A673 (cell line): ENCODE measurements at regions of chr2 and their contacts with region 1.

Region 1: GRCh38 chr2:190088917-190089316 is 26.4 kb upstream of the MSTN start:
- DNase-seq: peak; percentile 76
- H3K4me3 ChIP-seq: no peak overlapping the region
- H3K27ac ChIP-seq: no peak overlapping the region
- H3K4me1 ChIP-seq: peaks cover 3% of the 10 kb centered on the region
- H3K27me3 ChIP-seq: no peaks in the 10 kb centered on the region
- CTCF ChIP-seq: peak; percentile 75

Region 2: DNA sequence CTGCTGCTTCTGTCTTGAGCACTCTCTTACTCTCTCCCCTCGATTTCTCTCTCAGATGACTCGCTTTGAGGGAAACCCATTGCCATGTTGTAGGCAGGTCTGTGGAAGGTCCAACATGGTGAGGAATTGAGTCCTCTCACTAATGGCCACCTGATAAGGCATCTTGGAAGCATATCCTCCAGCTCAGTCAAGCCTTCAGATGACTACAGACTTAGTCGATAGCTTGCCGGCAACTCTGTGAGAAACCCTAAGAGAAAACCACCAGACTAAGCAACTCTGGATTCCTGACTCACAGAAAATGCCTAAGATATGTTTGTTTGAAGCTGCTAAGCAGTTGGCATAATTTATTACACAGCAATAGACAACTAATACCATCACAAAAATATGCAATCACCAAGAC is 596.5 kb before region 1 on chr2:
- CTCF ChIA-PET with region 1: no interaction called
- POLR2A ChIA-PET with region 1: no interaction called
- intact Hi-C with region 1: no loop called
- DNase-seq: no peak
- H3K4me3 ChIP-seq: no peak overlapping the region
- H3K27ac ChIP-seq: no peak overlapping the region
- H3K4me1 ChIP-seq: no peaks in the 10 kb centered on the region
- H3K27me3 ChIP-seq: no peaks in the 10 kb centered on the region
- CTCF ChIP-seq: no peak

Region 3: DNA sequence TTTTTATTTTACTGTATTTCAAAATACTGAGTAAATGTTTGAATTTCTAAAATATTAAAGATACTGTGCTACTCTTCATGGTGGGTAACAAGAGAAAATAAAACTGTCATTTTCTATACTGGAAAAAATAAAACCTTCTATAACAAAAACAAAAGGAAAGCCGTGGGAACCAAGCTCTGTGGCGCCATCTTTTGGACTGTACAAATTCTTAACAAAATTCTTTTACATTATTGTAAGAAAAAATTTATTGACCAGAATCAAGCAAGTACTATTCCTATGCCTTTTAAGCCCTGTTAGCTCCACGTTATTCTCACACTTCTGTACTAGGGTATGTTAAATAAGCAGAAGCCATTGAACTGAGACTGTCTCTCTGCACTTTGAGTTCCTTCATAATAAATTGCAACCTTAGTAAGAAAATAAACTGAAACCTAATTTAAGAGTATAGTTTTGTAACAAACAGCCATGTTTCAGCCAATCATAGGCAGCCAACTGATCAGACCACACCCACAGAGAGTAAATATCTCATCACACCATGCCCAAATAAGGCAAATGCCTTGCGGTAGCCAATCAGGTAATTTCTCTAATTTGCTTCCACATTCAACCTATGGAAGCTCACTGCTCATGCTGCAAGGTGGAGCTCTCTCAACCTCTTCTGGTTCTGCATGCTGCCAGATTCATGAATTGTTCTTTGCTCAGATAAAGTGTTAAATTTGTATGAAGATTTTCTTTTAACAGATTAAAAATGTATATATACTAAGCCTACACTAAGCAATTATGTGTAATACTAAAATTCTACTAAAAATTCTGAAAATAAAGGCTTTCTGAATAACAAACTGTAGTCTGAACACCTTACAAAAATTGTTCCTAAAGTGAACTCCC is 188.6 kb after region 1 on chr2:
- CTCF ChIA-PET with region 1: interaction called, 3 read pairs
- POLR2A ChIA-PET with region 1: no interaction called
- intact Hi-C with region 1: loop called (anchors 2 kb)
- DNase-seq: peak; percentile 61
- H3K4me3 ChIP-seq: no peak overlapping the region
- H3K27ac ChIP-seq: no peak overlapping the region
- H3K4me1 ChIP-seq: no peaks in the 10 kb centered on the region
- H3K27me3 ChIP-seq: no peaks in the 10 kb centered on the region
- CTCF ChIP-seq: peak; percentile 70

Region 4: GRCh38 chr2:190313880-190314279 is 225.0 kb after region 1 on chr2:
- CTCF ChIA-PET with region 1: no interaction called
- POLR2A ChIA-PET with region 1: no interaction called
- intact Hi-C with region 1: loop called (anchors 2 kb)
- DNase-seq: no peak
- H3K4me3 ChIP-seq: no peak overlapping the region
- H3K27ac ChIP-seq: no peak overlapping the region
- H3K4me1 ChIP-seq: peaks cover 10% of the 10 kb centered on the region
- H3K27me3 ChIP-seq: no peaks in the 10 kb centered on the region
- CTCF ChIP-seq: no peak

Region 5: GRCh38 chr2:190511104-190511503 is 422.2 kb after region 1 on chr2:
- CTCF ChIA-PET with region 1: no interaction called
- POLR2A ChIA-PET with region 1: no interaction called
- intact Hi-C with region 1: loop called (anchors 2 kb)
- DNase-seq: peak; percentile 36
- H3K4me3 ChIP-seq: no peak overlapping the region
- H3K27ac ChIP-seq: no peak overlapping the region
- H3K4me1 ChIP-seq: no peaks in the 10 kb centered on the region
- H3K27me3 ChIP-seq: no peaks in the 10 kb centered on the region
- CTCF ChIP-seq: peak; percentile 55; the same call in 1 of the 2 replicates

Region 6: GRCh38 chr2:190804182-190804795 is 715.4 kb after region 1 on chr2:
- CTCF ChIA-PET with region 1: no interaction called
- POLR2A ChIA-PET with region 1: no interaction called
- intact Hi-C with region 1: loop called (anchors 10 kb)
- DNase-seq: peak; percentile 43
- H3K4me3 ChIP-seq: no peak overlapping the region
- H3K27ac ChIP-seq: no peak overlapping the region
- H3K4me1 ChIP-seq: peaks cover 5% of the 10 kb centered on the region
- H3K27me3 ChIP-seq: no peaks in the 10 kb centered on the region
- CTCF ChIP-seq: peak; percentile 72